Endothelial cell of umbilical vein (primary cell): ENCODE measurements at regions of chr16 and their contacts with region 1.

Region 1: GRCh38 chr16:58755989-58756649 is 22.0 kb upstream of the GOT2 start:
- DNase-seq: peak; percentile 82
- H3K4me3 ChIP-seq: no peak overlapping the region
- H3K27ac ChIP-seq: peak overlapping the region; percentile 15
- H3K4me1 ChIP-seq: peaks cover 8% of the 10 kb centered on the region
- H3K27me3 ChIP-seq: no peaks in the 10 kb centered on the region
- CTCF ChIP-seq: peak; percentile 68 to 73
- POLR2A ChIP-seq: no peak

Region 2: DNA sequence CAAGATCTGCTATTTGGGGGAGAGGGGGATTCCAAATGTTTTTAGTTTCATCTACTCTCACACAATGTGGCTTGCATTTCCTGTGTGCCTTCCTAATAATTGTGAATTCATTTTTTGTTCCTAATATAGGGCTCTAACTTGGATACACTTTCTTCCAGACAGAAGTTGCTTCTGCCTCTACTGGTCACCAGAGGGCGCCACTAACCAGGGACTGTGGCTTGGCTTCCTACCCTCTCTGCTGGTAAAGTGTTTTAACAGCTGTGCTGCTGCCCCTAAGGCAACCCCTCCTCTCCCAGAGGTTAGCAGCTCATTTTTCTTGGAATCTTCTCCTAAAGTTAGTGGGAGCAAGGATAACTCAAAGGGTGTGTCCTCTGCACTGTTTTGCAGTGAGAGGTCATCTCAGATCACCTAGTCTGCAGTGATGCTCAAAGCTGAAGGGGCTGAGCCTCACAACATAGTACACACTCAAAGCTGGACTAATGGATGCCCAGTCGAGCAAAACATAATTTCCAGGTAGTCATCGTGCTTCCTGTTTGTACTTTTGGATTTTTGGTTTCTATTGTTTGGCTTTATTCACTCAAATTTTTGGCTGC is 456.3 kb before region 1 on chr16:
- CTCF ChIA-PET with region 1: interaction called, 17 read pairs
- POLR2A ChIA-PET with region 1: no interaction called
- dilution Hi-C with region 1: no loop called
- intact Hi-C with region 1: no loop called
- DNase-seq: peak; percentile 36
- H3K4me3 ChIP-seq: no peak overlapping the region
- H3K27ac ChIP-seq: no peak overlapping the region
- H3K4me1 ChIP-seq: no peaks in the 10 kb centered on the region
- H3K27me3 ChIP-seq: peaks cover 0 to under 1% of the 10 kb centered on the region in 2 experiments
- CTCF ChIP-seq: peak; percentile 82 to 87
- POLR2A ChIP-seq: no peak

Region 3: DNA sequence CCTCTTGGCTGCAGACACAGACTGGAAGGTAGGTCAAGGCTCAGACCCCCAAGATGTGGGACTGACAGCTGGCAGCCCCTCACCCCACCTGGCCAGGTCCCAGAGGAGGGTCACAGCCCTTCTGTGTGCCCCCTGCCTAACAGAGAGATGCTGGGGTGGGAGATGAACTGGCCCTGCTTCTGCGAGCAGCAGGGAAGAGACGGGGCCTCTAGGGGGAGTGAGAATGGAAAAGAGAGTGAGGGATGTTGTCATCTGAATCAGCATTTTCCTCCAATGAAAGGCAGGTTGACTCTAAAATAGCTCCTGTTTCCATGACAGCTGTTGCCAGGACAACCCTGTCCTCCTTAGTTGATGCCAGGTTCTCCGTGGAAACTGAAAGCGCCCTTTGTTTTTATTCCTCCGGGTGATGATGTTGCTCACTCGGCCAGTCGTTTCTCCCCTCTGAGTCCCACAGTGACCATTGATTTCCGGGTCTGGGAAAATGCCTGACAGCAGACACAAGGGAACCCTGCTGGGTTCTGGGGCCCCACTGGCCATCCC is 261.1 kb before region 1 on chr16:
- CTCF ChIA-PET with region 1: interaction called, 28 read pairs
- POLR2A ChIA-PET with region 1: no interaction called
- dilution Hi-C with region 1: no loop called
- intact Hi-C with region 1: loop called (anchors 5 kb)
- DNase-seq: peak; percentile 88
- H3K4me3 ChIP-seq: no peak overlapping the region
- H3K27ac ChIP-seq: peak overlapping the region; percentile 19
- H3K4me1 ChIP-seq: no peaks in the 10 kb centered on the region
- H3K27me3 ChIP-seq: no peaks in the 10 kb centered on the region
- CTCF ChIP-seq: peak; percentile 51 to 61
- POLR2A ChIP-seq: no peak

Region 4: DNA sequence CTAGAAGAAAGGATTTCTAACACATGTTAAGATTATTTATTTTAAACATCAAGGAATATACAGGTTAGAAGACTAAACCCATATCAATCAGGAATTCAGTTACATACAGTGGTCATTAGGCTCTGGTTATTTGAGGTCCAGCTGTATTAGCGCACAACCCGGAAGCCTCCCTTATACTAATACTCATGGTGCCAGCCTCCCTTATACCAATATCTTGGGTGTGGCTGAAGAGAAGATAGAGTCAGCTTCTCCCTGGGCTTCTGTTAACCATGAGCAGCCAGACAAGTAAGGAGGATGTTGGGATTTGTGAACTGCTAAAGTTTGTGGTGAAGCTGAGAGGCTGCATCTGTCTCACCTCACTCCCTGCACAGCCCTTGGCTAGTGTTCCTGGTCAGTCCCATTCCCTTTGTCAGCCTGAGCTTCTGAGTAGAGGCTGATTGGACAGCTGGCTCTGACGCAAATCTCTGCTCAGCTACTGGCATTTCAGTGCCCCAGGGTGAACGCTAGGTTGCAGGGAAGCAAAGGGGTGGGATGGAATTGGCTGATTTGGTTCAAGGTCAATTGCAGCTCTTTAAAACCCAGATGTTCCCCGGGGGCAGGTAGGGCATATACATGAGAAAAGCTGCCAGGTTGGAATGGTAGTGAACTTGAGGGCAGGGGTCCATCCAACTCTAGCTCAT is 103.5 kb before region 1 on chr16:
- CTCF ChIA-PET with region 1: interaction called, 64 read pairs
- POLR2A ChIA-PET with region 1: no interaction called
- dilution Hi-C with region 1: no loop called
- intact Hi-C with region 1: no loop called
- DNase-seq: no peak
- H3K4me3 ChIP-seq: no peak overlapping the region
- H3K27ac ChIP-seq: no peak overlapping the region
- H3K4me1 ChIP-seq: no peaks in the 10 kb centered on the region
- H3K27me3 ChIP-seq: peaks cover 2 to 5% of the 10 kb centered on the region in 2 experiments
- CTCF ChIP-seq: no peak
- POLR2A ChIP-seq: no peak

Region 5: GRCh38 chr16:58684354-58685083 is 71.6 kb before region 1 on chr16 and contains the start of gene SLC38A7:
- CTCF ChIA-PET with region 1: interaction called, 66 read pairs
- POLR2A ChIA-PET with region 1: interaction called, 3 read pairs
- dilution Hi-C with region 1: no loop called
- intact Hi-C with region 1: loop called (anchors 1 kb)
- DNase-seq: peak; percentile 86
- H3K4me3 ChIP-seq: peak within 1 kb of the TSS; percentile 62 to 95 (median 76)
- H3K27ac ChIP-seq: peak within 1 kb of the TSS; percentile 58
- H3K4me1 ChIP-seq: peaks cover 10% of the 10 kb centered on the region
- H3K27me3 ChIP-seq: no peaks in the 10 kb centered on the region
- CTCF ChIP-seq: no peak
- POLR2A ChIP-seq: peak; percentile 75
- total RNA-seq, gene SLC38A7: 44.4 and 45.5 TPM in 2 replicates

Region 6: DNA sequence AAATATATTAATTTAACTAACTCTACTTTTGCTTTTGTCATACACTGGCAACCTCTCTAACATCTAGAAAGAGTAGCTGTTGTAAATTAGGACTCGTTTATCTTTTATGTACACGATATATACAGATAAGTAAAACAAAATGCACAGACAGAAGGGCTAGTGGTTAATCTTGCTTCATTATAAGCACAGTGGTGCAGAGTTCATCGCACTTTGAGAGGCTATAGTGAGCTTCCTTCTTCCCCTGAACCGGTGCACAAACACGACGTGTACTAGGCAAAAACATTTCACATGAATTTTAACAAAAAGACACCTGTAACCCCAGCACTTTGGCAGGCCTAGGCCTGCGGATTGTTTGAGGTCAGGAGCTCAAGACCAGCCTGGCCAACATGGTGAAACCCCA is 11.6 kb before region 1 on chr16:
- CTCF ChIA-PET with region 1: interaction called, 25 read pairs
- POLR2A ChIA-PET with region 1: no interaction called
- dilution Hi-C with region 1: no loop called
- intact Hi-C with region 1: no loop called
- DNase-seq: no peak
- H3K4me3 ChIP-seq: no peak overlapping the region
- H3K27ac ChIP-seq: no peak overlapping the region
- H3K4me1 ChIP-seq: no peaks in the 10 kb centered on the region
- H3K27me3 ChIP-seq: no peaks in the 10 kb centered on the region
- CTCF ChIP-seq: no peak
- POLR2A ChIP-seq: no peak

Region 7: GRCh38 chr16:58940609-58941008 is 184.5 kb after region 1 on chr16:
- CTCF ChIA-PET with region 1: no interaction called
- POLR2A ChIA-PET with region 1: no interaction called
- dilution Hi-C with region 1: no loop called
- intact Hi-C with region 1: no loop called
- DNase-seq: no peak
- H3K4me3 ChIP-seq: no peak overlapping the region
- H3K27ac ChIP-seq: no peak overlapping the region
- H3K4me1 ChIP-seq: no peaks in the 10 kb centered on the region
- H3K27me3 ChIP-seq: no peaks in the 10 kb centered on the region
- CTCF ChIP-seq: no peak
- POLR2A ChIP-seq: no peak